Adrenal gland (tissue), 19 donors: ENCODE measurements at regions of chr15 and their contacts with region 1.

Region 1: GRCh38 chr15:67833710-67834511 is 5.9 kb downstream of the RNU6-1 start:
- DNase-seq: peak in 3 of 7 donors; percentile 44 to 48 (median 47)
- H3K4me3 ChIP-seq: peak overlapping the region in 1 of 4 donors; percentile 22
- H3K27ac ChIP-seq: no peak overlapping the region
- H3K4me1 ChIP-seq: peaks cover 11 to 42% of the 10 kb centered on the region in 2 donors
- H3K27me3 ChIP-seq: peaks cover 64% of the 10 kb centered on the region
- CTCF ChIP-seq: peak; percentile 12 to 49 (median 34)
- POLR2A ChIP-seq: no peak

Region 2: DNA sequence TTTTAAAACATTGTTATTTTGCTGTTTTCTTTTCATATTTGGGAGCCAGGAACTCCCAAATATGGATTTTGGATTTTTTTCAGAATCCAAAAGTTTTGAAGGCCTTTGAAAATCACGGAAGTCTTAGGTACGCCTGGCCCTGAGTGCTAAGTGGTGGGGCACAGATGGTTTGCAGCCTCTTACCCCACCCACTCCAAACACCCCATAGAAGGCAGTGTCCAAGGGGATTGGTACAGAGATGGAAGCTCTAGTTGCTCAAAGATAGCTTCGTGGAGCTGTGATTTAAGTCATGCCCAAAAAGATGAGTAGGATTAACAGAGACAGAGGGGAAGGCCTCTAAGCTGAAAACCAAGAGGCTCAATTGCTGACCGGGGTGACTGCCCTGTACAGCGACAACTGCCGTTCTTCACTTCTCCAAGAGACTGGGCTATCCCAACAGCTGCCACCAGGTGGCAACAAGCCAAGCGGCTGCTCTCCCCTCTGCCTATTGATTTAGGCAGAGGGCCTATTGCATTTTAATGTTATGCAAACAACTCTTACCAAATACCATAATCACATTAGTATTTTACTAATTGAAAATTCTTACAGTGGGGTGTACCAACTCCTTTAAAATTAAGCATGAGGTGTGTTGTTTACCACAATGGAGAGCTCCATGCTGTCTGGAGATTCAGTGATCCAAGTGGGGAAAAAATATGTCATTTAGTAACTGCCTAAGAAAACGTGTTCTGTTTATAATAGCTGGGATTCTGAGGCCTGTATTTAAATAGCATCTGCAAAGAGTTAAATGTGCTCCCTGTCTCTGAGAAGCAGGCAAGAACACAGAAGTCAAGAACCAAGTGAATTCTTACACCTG is 377.0 kb before region 1 on chr15:
- intact Hi-C with region 1: loop called (anchors 2 to 5 kb)
- DNase-seq: peak; percentile 80 to 93 (median 88)
- H3K4me3 ChIP-seq: no peak overlapping the region
- H3K27ac ChIP-seq: no peak overlapping the region
- H3K4me1 ChIP-seq: no peaks in the 10 kb centered on the region
- H3K27me3 ChIP-seq: no peaks in the 10 kb centered on the region
- CTCF ChIP-seq: peak; percentile 62 to 91 (median 82)
- POLR2A ChIP-seq: no peak

Region 3: GRCh38 chr15:67820992-67821783 is 12.7 kb before region 1 on chr15:
- intact Hi-C with region 1: no loop called
- DNase-seq: peak in 6 of 7 donors; percentile 55 to 67 (median 60)
- H3K4me3 ChIP-seq: no peak overlapping the region
- H3K27ac ChIP-seq: no peak overlapping the region
- H3K4me1 ChIP-seq: peaks cover 19 to 27% of the 10 kb centered on the region in 2 donors
- H3K27me3 ChIP-seq: peaks cover 70% of the 10 kb centered on the region
- CTCF ChIP-seq: no peak
- POLR2A ChIP-seq: no peak

Region 4: DNA sequence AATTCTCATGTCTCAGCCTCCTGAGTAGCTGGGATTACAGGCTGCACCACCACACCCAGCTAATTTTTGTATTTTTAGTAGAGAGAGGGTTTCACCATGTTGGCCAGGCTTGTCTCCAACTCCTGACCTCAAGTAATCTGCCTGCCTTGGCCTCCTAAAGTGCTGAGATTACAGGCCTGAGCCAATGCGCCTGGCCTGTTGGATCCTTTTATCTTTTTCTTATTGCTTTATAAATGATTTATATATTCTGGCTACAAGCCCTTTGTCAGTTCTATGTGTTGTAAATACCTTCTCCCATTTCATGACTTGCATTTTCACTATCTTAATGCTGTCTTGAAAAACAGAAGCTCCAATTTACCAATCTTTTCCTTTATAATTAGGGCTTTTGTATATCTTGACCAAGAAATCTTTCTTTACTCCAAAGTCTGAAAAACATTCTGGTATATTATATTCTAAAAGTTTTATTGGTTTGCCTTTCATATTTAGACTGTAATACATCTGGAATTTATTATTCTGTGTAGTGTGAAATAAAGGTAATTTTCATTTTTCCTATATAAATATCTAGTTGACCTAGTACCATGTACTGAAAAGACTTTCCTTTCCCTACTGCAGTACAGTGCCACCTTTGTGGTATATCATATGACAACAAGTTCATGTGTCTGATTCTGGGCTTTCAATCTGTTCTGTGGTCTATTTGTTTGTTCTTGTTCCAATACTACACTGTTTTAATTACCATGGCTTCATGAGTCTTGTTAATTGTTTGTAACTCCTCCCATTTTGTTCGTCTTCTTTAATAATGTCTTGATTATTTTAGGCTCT is 58.9 kb after region 1 on chr15:
- intact Hi-C with region 1: no loop called
- DNase-seq: peak in 6 of 7 donors; percentile 62 to 87 (median 80)
- H3K4me3 ChIP-seq: no peak overlapping the region
- H3K27ac ChIP-seq: peak overlapping the region; percentile 3 to 68 (median 36)
- H3K4me1 ChIP-seq: peaks cover 8 to 12% of the 10 kb centered on the region in 2 donors
- H3K27me3 ChIP-seq: no peaks in the 10 kb centered on the region
- CTCF ChIP-seq: no peak
- POLR2A ChIP-seq: no peak